ENCODE measurements at regions of chr17 and their contacts with region 1.

Region 1: DNA sequence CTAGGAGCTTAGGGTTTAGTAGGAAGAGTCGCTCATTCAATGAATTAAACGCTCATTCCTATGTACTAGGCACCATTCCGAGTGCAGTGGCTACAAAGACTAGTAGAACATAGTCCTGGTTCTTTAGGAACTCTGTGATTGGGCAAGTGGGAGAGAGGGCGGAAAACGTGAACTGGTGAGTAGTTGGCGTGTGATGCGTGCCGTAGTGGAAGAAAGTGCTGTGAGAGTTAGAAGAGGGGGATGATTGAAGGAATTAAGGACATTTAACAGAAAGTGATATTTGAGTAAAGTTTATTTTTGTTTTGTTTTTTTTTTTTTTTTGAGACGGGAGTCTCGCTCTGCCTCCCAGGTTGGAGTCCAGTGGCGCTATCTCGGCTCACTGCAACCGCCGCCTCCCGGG is 7.9 kb upstream of the SLFN14 start:
- DNase-seq: no peak
- H3K4me3 ChIP-seq: peak overlapping the region; percentile 80 to 93
- H3K27ac ChIP-seq: peak overlapping the region; percentile 72 to 84
- H3K4me1 ChIP-seq: peaks cover 3 to 18% of the 10 kb centered on the region in 2 donors
- H3K27me3 ChIP-seq: no peaks in the 10 kb centered on the region
- CTCF ChIP-seq: no peak

Region 2: GRCh38 chr17:35373534-35373983 is 195.0 kb before region 1 on chr17 and contains the start of gene SLFN11:
- intact Hi-C with region 1: loop called (anchors 1 kb)
- DNase-seq: peak; percentile 79 to 95
- H3K4me3 ChIP-seq: peak within 1 kb of the TSS; percentile 78 to 87
- H3K27ac ChIP-seq: peak within 1 kb of the TSS; percentile 97
- H3K4me1 ChIP-seq: peaks cover 0 to 10% of the 10 kb centered on the region in 2 donors
- H3K27me3 ChIP-seq: no peaks in the 10 kb centered on the region
- CTCF ChIP-seq: no peak
- total RNA-seq, gene SLFN11: 30.3 TPM

Region 3: DNA sequence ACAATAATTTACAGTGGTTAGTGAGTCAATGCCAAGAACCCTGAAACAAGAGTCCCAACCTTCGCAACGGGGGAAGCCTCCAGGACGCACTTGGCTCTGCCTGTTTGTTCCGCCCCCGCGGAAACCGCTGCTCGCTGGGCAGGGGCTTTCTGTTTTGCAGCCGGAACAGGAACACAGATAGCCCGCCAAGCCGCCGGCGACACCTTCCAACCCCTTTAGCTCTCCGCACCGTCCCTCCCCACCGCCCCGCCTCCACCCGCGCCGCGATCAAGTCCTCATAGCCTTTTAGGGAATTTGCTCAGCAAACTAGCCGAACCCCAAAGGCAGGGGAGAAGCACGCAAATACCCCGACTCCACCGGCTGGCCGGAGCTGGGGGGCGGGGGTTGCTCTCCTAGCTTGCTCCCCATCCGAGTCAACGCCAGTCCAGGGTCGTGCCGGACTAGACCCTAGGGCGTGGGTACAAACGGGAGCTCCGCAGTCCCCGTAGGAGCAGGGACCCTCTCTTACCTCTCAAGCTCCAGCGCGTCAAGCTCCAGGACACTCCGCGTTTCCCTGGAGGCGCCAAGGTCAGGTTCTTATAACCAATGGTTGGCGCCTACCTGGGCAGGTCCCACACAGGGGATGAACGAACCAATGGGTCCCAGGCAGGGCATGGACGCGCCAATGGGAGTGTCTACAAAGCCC is 120.2 kb before region 1 on chr17 and contains the start of gene SLFN13:
- intact Hi-C with region 1: loop called (anchors 5 kb)
- DNase-seq: peak; percentile 57 to 85
- H3K4me3 ChIP-seq: peak within 1 kb of the TSS; percentile 69 to 96
- H3K27ac ChIP-seq: peak within 1 kb of the TSS; percentile 42 to 71
- H3K4me1 ChIP-seq: peaks cover 0 to 9% of the 10 kb centered on the region in 2 donors
- H3K27me3 ChIP-seq: no peaks in the 10 kb centered on the region
- CTCF ChIP-seq: no peak
- total RNA-seq, gene SLFN13: 7.1 TPM

Region 4: DNA sequence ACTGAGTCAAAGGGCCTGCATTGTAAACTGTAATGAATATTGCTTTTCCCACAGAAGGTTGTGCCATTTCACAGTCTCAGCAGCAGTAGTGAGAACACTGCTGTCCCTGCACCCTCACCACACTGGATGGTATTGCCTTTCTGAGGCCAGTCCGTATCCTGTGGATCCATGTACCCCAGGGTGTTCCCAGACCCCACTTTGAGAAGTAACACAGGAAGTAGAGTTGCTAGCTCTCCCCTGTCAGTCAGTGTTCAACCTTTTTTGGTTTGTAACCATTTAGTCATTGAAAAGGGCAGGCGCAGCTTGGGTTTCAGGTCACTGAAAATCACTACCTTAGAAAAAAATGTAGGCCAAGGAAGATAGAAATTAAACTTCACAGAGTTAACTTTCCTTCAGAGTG is 69.0 kb before region 1 on chr17:
- intact Hi-C with region 1: no loop called
- DNase-seq: no peak
- H3K4me3 ChIP-seq: no peak overlapping the region
- H3K27ac ChIP-seq: no peak overlapping the region
- H3K4me1 ChIP-seq: peaks cover 0 to 3% of the 10 kb centered on the region in 2 donors
- H3K27me3 ChIP-seq: peaks cover 28% of the 10 kb centered on the region
- CTCF ChIP-seq: no peak

Region 5: GRCh38 chr17:35587074-35587971 is 18.8 kb after region 1 on chr17 and contains the start of gene AP2B1:
- intact Hi-C with region 1: loop called (anchors 1 kb)
- DNase-seq: peak; percentile 81 to 98
- H3K4me3 ChIP-seq: peak within 1 kb of the TSS; percentile 82 to 99
- H3K27ac ChIP-seq: peak within 1 kb of the TSS; percentile 88 to 96
- H3K4me1 ChIP-seq: peaks cover 5 to 12% of the 10 kb centered on the region in 2 donors
- H3K27me3 ChIP-seq: no peaks in the 10 kb centered on the region
- CTCF ChIP-seq: no peak
- total RNA-seq, gene AP2B1: 59.5 TPM

Measured in ascending aorta (tissue), 2 donors.